A673 (cell line): ENCODE measurements at regions of chr11 and their contacts with region 1.

Region 1: DNA sequence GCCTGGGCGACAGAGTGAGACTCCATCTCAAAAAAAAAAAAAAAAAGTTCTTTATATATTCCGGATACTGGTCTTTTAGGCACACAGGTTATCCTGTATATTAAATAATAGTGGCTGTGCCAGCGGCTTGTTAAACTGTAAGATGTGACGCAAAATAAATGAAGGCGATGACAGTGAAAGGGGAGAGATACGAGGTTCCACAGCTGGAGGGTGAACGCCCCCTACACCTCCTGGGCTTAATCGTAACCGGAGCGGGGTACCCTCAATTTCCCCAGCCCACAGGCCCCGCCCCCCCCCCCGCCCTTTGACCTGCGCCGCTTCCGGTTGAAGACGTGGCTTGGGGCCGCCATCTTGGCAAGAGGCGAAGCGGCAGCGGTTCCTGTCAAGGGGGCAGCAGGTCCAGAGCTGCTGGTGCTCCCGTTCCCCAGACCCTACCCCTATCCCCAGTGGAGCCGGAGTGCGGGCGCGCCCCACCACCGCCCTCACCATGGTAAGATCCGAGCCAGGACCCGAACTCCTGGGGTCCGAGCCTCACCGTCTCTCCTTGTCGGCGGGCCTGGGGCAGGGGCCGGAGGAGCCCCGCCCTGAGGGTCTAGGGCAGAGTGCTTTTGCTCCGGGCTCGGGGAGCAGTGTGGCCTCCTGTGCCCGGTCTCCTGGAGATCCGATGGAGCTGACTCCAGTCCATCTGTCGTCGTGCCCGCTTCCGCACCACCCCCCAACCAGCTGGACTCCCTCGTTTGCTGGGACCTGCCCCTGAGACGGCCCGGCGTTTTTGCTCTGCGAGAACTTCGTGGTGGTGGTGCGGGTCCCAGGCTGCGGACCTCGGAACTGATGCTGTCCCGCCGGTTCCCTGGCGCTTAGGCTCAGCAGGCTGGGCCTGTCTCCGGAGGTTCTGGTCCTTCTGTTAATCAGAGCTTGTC is at the start of gene ARCN1:
- DNase-seq: peak; percentile 89
- H3K4me3 ChIP-seq: peak within 1 kb of the TSS; percentile 100
- H3K27ac ChIP-seq: peak within 1 kb of the TSS; percentile 98
- H3K4me1 ChIP-seq: peaks cover 28% of the 10 kb centered on the region
- H3K27me3 ChIP-seq: no peaks in the 10 kb centered on the region
- CTCF ChIP-seq: no peak
- total RNA-seq, gene ARCN1: 217 and 220 TPM in 2 replicates

Region 2: DNA sequence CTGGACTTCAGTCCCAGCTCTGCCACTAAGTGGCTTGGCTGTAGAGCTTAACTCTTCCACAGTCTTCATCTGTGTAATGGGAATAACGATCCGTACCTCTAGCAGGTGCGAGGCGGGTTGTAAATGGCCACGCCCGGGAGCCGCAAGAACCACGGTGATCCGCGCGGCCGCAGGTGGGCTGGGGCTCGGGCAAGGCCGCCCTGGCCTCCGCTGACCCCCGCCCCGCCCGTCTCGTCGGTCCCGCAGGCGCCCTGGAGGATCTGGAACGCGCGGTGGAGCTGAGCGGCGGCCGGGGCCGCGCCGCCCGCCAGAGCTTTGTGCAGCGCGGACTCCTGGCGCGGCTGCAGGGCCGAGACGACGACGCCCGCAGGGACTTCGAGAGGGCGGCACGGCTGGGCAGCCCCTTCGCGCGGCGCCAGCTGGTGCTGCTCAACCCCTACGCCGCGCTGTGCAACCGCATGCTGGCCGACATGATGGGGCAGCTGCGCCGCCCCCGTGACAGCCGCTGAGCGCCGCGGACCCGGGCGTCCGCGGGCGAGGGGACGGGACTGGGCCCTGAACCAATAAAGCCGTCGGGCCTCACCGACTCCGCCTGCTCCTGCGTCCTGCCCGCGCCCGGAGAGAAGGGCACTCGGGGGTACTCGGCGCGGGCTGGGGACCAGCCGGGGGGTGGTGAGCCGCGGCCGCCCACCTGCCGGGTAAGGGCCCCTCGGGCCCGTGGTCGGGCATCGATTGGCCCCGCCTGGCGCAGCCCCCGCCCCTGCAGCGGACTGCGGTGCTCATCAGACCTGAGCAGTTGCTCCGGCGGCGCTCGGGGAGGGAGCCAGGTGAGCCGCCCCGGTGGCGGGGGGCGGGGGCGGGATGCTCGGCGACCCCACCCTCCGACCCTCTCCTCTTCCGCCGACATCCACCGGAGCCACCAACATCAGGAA is 41.6 kb before region 1 on chr11 and contains the start of gene TMEM25:
- CTCF ChIA-PET with region 1: no interaction called
- POLR2A ChIA-PET with region 1: interaction called, 10 read pairs
- intact Hi-C with region 1: loop called (anchors 2 kb)
- DNase-seq: peak; percentile 68
- H3K4me3 ChIP-seq: peak within 1 kb of the TSS; percentile 78
- H3K27ac ChIP-seq: peak within 1 kb of the TSS; percentile 80
- H3K4me1 ChIP-seq: peaks cover 9% of the 10 kb centered on the region
- H3K27me3 ChIP-seq: no peaks in the 10 kb centered on the region
- CTCF ChIP-seq: no peak
- total RNA-seq, gene TMEM25: 13.2 and 13.4 TPM in 2 replicates

Region 3: GRCh38 chr11:118587952-118588351 is 15.6 kb after region 1 on chr11:
- CTCF ChIA-PET with region 1: no interaction called
- POLR2A ChIA-PET with region 1: no interaction called
- intact Hi-C with region 1: no loop called
- DNase-seq: no peak
- H3K4me3 ChIP-seq: no peak overlapping the region
- H3K27ac ChIP-seq: no peak overlapping the region
- H3K4me1 ChIP-seq: no peaks in the 10 kb centered on the region
- H3K27me3 ChIP-seq: no peaks in the 10 kb centered on the region
- CTCF ChIP-seq: no peak

Region 4: DNA sequence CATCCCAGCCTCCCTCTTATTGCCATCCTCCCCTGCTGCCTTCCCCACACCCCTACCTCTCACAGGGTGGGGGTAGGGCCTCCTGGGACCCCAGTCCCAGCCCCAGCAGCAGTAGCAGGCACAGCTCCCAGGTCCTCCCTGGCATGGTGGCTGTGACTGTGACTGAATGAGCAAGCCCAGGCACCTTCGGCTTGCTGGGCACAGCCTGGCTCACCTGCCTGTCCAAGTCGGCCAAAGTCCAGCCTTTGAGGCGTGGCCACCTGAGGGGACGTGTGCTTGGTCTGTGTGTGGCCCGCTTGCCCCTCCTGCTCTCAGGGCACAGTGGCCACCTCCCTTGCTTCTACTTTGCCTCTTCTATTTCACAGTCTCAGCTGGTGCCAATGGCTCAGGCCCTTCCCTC is 107.2 kb after region 1 on chr11 and contains the start of gene TREH:
- CTCF ChIA-PET with region 1: no interaction called
- POLR2A ChIA-PET with region 1: interaction called, 15 read pairs
- intact Hi-C with region 1: no loop called
- DNase-seq: no peak
- H3K4me3 ChIP-seq: no peak within 1 kb of the TSS
- H3K27ac ChIP-seq: no peak within 1 kb of the TSS
- H3K4me1 ChIP-seq: no peaks in the 10 kb centered on the region
- H3K27me3 ChIP-seq: no peaks in the 10 kb centered on the region
- CTCF ChIP-seq: no peak
- total RNA-seq, gene TREH: not detected in 2 replicates

Region 5: GRCh38 chr11:118820412-118821357 is 248.4 kb after region 1 on chr11:
- CTCF ChIA-PET with region 1: no interaction called
- POLR2A ChIA-PET with region 1: no interaction called
- intact Hi-C with region 1: no loop called
- DNase-seq: no peak
- H3K4me3 ChIP-seq: no peak overlapping the region
- H3K27ac ChIP-seq: no peak overlapping the region
- H3K4me1 ChIP-seq: no peaks in the 10 kb centered on the region
- H3K27me3 ChIP-seq: no peaks in the 10 kb centered on the region
- CTCF ChIP-seq: no peak